WTC11 (cell line): ENCODE measurements at regions of chr10 and their contacts with region 1.

Region 1: DNA sequence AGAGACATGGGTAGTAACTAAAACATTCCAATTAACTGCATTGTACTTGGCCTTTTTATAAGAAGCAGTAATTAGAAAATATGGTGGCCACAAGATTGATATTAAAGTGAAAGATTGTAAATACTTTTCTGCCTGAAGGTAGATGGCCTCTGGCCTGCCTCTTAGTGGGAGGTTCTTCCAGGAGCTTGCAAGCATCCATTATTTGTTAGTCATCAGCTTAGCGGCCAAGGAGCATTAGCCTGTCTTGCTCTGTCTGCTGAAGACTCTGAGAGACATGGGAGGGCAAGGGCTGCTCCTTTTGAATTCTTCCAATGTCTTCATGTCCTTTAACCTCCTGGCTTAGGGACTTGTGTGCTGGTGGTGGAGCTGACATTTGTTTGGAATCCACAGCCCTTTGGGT is 80.4 kb downstream of the TCF7L2 start:
- DNase-seq: no peak
- ATAC-seq: no peak
- H3K4me3 Mint-ChIP-seq: no peak overlapping the region
- H3K27ac Mint-ChIP-seq: no peak overlapping the region; the same call in 1 of the 2 replicates
- H3K4me1 Mint-ChIP-seq: peaks cover 69% of the 10 kb centered on the region
- H3K27me3 Mint-ChIP-seq: no peaks in the 10 kb centered on the region
- CTCF ChIP-seq: no peak

Region 2: GRCh38 chr10:113045147-113046055 is 14.9 kb after region 1 on chr10:
- CTCF ChIA-PET with region 1: no interaction called
- POLR2A ChIA-PET with region 1: no interaction called
- DNase-seq: no peak
- ATAC-seq: no peak
- H3K4me3 Mint-ChIP-seq: no peak overlapping the region
- H3K27ac Mint-ChIP-seq: peak overlapping the region; percentile 27
- H3K4me1 Mint-ChIP-seq: peaks cover 81% of the 10 kb centered on the region
- H3K27me3 Mint-ChIP-seq: no peaks in the 10 kb centered on the region
- CTCF ChIP-seq: no peak

Region 3: DNA sequence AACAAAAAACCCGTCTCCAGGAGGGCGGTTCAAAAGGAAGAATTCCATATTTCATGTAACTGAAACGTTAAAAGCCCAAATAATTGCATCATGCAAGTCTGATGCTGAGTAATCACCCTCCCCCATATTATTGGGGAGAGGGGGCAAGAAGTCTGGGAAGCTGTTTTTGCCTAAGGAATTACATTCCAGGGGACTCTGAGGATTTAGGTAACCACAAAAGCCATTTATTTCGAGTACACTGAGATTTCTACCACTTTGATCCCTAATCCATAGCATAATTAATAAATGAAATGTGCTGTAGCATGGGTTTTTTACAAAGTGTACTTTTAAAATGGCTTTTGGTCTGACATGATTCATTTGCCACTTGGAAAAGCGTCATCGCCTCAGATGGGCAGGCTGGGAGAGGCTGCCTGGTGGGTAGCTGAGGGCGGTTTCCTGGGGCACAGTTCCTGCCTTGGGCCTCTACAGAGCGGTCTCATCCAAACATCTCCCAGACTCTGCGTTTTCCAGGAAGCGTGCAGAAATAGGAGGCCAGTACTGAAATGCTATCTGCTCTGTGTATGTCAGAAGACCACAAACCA is 26.1 kb after region 1 on chr10:
- CTCF ChIA-PET with region 1: interaction called, 3 read pairs
- POLR2A ChIA-PET with region 1: interaction called, 10 read pairs
- DNase-seq: no peak
- ATAC-seq: no peak
- H3K4me3 Mint-ChIP-seq: no peak overlapping the region
- H3K27ac Mint-ChIP-seq: peak overlapping the region; percentile 51
- H3K4me1 Mint-ChIP-seq: peaks cover 54% of the 10 kb centered on the region
- H3K27me3 Mint-ChIP-seq: no peaks in the 10 kb centered on the region
- CTCF ChIP-seq: no peak